Dendritic cell treated with granulocyte-macrophage colony-stimulating factor and Interleukin-4, amounts not matched to agents 40 ng/mL and 50 ng/mL, for 4 days (primary cell): ENCODE measurements at regions of chr4 and their contacts with region 1.

Region 1: GRCh38 chr4:87838890-87839591 is 6.3 kb downstream of the MEPE start:
- H3K4me3 Mint-ChIP-seq: no peak overlapping the region
- H3K27ac Mint-ChIP-seq: no peak overlapping the region
- H3K4me1 Mint-ChIP-seq: peaks cover 25% of the 10 kb centered on the region
- H3K27me3 Mint-ChIP-seq: no peaks in the 10 kb centered on the region

Region 2: DNA sequence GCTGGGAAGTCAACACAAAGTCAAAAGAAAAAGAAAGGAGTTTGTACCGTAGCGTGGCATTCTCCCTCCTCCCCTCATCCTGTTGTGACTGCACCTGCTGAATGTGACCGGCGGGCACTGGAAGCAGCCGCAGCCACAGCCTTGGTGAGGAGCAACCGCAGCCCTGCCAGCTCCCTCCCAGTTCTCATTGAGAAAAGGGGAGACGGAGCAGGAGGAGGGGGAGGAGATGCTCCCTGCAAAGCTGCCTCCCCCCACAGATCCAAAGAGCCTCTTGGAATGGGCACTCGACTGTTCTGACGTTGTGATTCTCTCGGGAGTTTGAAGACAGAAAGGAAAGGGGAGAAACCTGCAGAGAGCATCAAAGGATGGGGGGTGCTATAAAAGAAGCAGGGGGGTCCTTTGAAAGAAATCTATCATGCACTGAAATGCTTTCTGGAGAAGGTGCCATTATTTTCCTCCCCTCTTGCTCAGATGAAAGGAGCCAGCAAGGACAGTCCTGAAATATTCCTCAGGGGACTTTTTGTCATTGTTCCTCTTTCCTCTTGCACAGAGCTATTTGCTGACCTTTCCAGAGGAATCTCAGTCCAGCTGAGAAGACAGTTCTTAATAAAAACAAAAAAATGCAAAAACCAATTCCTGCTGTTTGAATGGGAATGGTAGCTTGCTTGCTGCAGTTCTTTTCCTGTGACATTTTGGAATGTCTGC is 1908.9 kb before region 1 on chr4:
- intact Hi-C with region 1: no loop called
- H3K4me3 Mint-ChIP-seq: peak overlapping the region; percentile 65
- H3K27ac Mint-ChIP-seq: peak overlapping the region; percentile 18
- H3K4me1 Mint-ChIP-seq: peaks cover 40% of the 10 kb centered on the region
- H3K27me3 Mint-ChIP-seq: peaks cover 20% of the 10 kb centered on the region

Region 3: GRCh38 chr4:87498446-87498900 is 340.6 kb before region 1 on chr4:
- intact Hi-C with region 1: loop called (anchors 1 kb)
- H3K4me3 Mint-ChIP-seq: no peak overlapping the region
- H3K27ac Mint-ChIP-seq: no peak overlapping the region
- H3K4me1 Mint-ChIP-seq: no peaks in the 10 kb centered on the region
- H3K27me3 Mint-ChIP-seq: no peaks in the 10 kb centered on the region

Region 4: GRCh38 chr4:87679449-87680169 is 159.4 kb before region 1 on chr4:
- intact Hi-C with region 1: loop called (anchors 1 kb)
- H3K4me3 Mint-ChIP-seq: no peak overlapping the region
- H3K27ac Mint-ChIP-seq: no peak overlapping the region
- H3K4me1 Mint-ChIP-seq: no peaks in the 10 kb centered on the region
- H3K27me3 Mint-ChIP-seq: no peaks in the 10 kb centered on the region

Region 5: DNA sequence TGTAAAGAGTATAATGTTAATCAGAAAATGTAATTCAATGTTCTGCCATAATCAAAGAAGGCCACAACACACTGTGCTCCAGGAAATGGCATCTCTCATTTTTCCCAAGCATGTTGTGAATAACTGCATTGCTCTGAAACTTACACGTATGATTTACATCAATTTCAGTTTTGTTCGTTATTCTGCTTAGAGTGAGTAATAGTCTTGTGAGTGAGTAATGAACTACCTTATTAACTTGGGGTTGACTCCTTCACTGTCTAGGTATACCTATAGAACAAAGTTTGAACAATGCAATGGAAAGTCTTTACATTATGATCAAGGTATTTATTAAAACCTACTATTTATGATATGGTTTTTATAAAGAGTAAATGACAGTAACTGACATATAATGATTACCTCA is 57.5 kb before region 1 on chr4:
- intact Hi-C with region 1: no loop called
- H3K4me3 Mint-ChIP-seq: no peak overlapping the region
- H3K27ac Mint-ChIP-seq: no peak overlapping the region
- H3K4me1 Mint-ChIP-seq: no peaks in the 10 kb centered on the region
- H3K27me3 Mint-ChIP-seq: no peaks in the 10 kb centered on the region

Region 6: GRCh38 chr4:87973283-87974169 is 134.5 kb after region 1 on chr4:
- intact Hi-C with region 1: no loop called
- H3K4me3 Mint-ChIP-seq: no peak overlapping the region
- H3K27ac Mint-ChIP-seq: no peak overlapping the region
- H3K4me1 Mint-ChIP-seq: peaks cover 7% of the 10 kb centered on the region
- H3K27me3 Mint-ChIP-seq: peaks cover 24% of the 10 kb centered on the region

Region 7: GRCh38 chr4:88659055-88659889 is 820.2 kb after region 1 on chr4:
- intact Hi-C with region 1: no loop called
- H3K4me3 Mint-ChIP-seq: no peak overlapping the region
- H3K27ac Mint-ChIP-seq: no peak overlapping the region
- H3K4me1 Mint-ChIP-seq: no peaks in the 10 kb centered on the region
- H3K27me3 Mint-ChIP-seq: no peaks in the 10 kb centered on the region